CD8-positive, alpha-beta T cell (primary cell): ENCODE measurements at regions of chr2 and their contacts with region 1.

Region 1: GRCh38 chr2:212237350-212238095 is 301.1 kb downstream of the ERBB4 start:
- DNase-seq: peak in 1 of 9 experiments; percentile 6
- ATAC-seq: no peak
- H3K4me3 ChIP-seq: no peak overlapping the region
- H3K4me3 Mint-ChIP-seq: no peak overlapping the region
- H3K27ac ChIP-seq: no peak overlapping the region
- H3K27ac Mint-ChIP-seq: no peak overlapping the region
- H3K4me1 ChIP-seq: no peaks in the 10 kb centered on the region
- H3K4me1 Mint-ChIP-seq: no peaks in the 10 kb centered on the region
- H3K27me3 ChIP-seq: no peaks in the 10 kb centered on the region
- H3K27me3 Mint-ChIP-seq: no peaks in the 10 kb centered on the region
- CTCF ChIP-seq: no peak

Region 2: GRCh38 chr2:211722928-211723327 is 514.6 kb before region 1 on chr2:
- CTCF ChIA-PET with region 1: no interaction called
- POLR2A ChIA-PET with region 1: no interaction called
- intact Hi-C with region 1: no loop called
- DNase-seq: no peak
- ATAC-seq: no peak
- H3K4me3 ChIP-seq: no peak overlapping the region
- H3K4me3 Mint-ChIP-seq: no peak overlapping the region
- H3K27ac ChIP-seq: no peak overlapping the region
- H3K27ac Mint-ChIP-seq: no peak overlapping the region
- H3K4me1 ChIP-seq: no peaks in the 10 kb centered on the region
- H3K4me1 Mint-ChIP-seq: no peaks in the 10 kb centered on the region
- H3K27me3 ChIP-seq: no peaks in the 10 kb centered on the region
- H3K27me3 Mint-ChIP-seq: no peaks in the 10 kb centered on the region
- CTCF ChIP-seq: no peak

Region 3: GRCh38 chr2:212276813-212277212 is 39.3 kb after region 1 on chr2:
- CTCF ChIA-PET with region 1: no interaction called
- POLR2A ChIA-PET with region 1: no interaction called
- intact Hi-C with region 1: loop called in 1 of 2 experiments (anchors 1 kb)
- DNase-seq: no peak
- ATAC-seq: no peak
- H3K4me3 ChIP-seq: no peak overlapping the region
- H3K4me3 Mint-ChIP-seq: no peak overlapping the region
- H3K27ac ChIP-seq: no peak overlapping the region
- H3K27ac Mint-ChIP-seq: no peak overlapping the region
- H3K4me1 ChIP-seq: no peaks in the 10 kb centered on the region
- H3K4me1 Mint-ChIP-seq: no peaks in the 10 kb centered on the region
- H3K27me3 ChIP-seq: no peaks in the 10 kb centered on the region
- H3K27me3 Mint-ChIP-seq: no peaks in the 10 kb centered on the region
- CTCF ChIP-seq: no peak